ENCODE measurements at regions of chr17 and their contacts with region 1.

Region 1: GRCh38 chr17:8658810-8659209 is 28.3 kb upstream of the MYH10 start:
- DNase-seq: no peak
- H3K4me3 ChIP-seq: no peak overlapping the region
- H3K27ac ChIP-seq: no peak overlapping the region
- H3K4me1 ChIP-seq: peaks cover 0 to 13% (median 5%) of the 10 kb centered on the region in 4 donors
- H3K27me3 ChIP-seq: no peaks in the 10 kb centered on the region
- CTCF ChIP-seq: no peak

Region 2: DNA sequence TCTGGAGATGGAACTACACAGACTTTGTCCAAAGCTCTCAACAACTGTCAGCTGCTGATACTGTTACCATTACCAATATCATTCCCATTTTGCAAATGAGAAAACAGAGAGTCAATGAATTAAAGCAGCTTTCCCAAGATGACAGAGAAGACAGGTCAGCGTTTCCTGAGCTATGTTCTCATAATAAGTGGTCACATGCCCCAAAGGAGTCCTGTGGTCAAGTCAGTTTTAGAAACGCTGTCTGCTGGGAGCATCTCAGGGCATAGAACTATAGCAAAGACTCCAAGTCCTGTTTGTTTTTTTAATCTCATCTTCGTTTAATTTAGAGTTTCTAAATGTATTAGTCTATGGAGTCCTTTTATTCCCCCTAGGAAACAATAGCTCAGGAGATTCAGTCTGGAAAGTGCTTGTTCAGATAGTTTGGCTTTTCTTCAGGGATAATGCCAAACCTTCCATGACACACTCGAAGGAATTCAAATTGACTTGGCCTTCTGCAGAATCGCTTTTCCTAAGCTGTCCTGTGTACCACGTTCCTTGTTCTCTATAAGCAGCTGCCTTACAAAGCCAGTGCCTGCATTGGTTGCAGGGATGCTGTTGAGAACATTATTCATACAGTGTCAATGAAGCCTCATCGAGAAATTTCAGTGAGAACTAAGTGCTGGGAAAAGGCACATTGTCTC is 73.7 kb after region 1 on chr17:
- intact Hi-C with region 1: loop called (anchors 5 kb)
- DNase-seq: peak in 1 of 2 donors; percentile 28
- H3K4me3 ChIP-seq: no peak overlapping the region
- H3K27ac ChIP-seq: peak overlapping the region; percentile 44 to 54
- H3K4me1 ChIP-seq: peaks cover 0 to 8% (median 6%) of the 10 kb centered on the region in 4 donors
- H3K27me3 ChIP-seq: no peaks in the 10 kb centered on the region
- CTCF ChIP-seq: no peak

Region 3: GRCh38 chr17:8826808-8827435 is 168.1 kb after region 1 on chr17:
- intact Hi-C with region 1: no loop called
- DNase-seq: no peak
- H3K4me3 ChIP-seq: no peak overlapping the region
- H3K27ac ChIP-seq: no peak overlapping the region
- H3K4me1 ChIP-seq: no peaks in the 10 kb centered on the region
- H3K27me3 ChIP-seq: peaks cover 0 to 45% of the 10 kb centered on the region in 2 donors
- CTCF ChIP-seq: no peak

Region 4: GRCh38 chr17:8857919-8858318 is 199.1 kb after region 1 on chr17:
- intact Hi-C with region 1: no loop called
- DNase-seq: no peak
- H3K4me3 ChIP-seq: no peak overlapping the region
- H3K27ac ChIP-seq: no peak overlapping the region
- H3K4me1 ChIP-seq: peaks cover 0 to 11% (median 0%) of the 10 kb centered on the region in 4 donors
- H3K27me3 ChIP-seq: peaks cover 0 to 17% of the 10 kb centered on the region in 2 donors
- CTCF ChIP-seq: no peak